ENCODE measurements at regions of chr4 and their contacts with region 1.

Region 1: DNA sequence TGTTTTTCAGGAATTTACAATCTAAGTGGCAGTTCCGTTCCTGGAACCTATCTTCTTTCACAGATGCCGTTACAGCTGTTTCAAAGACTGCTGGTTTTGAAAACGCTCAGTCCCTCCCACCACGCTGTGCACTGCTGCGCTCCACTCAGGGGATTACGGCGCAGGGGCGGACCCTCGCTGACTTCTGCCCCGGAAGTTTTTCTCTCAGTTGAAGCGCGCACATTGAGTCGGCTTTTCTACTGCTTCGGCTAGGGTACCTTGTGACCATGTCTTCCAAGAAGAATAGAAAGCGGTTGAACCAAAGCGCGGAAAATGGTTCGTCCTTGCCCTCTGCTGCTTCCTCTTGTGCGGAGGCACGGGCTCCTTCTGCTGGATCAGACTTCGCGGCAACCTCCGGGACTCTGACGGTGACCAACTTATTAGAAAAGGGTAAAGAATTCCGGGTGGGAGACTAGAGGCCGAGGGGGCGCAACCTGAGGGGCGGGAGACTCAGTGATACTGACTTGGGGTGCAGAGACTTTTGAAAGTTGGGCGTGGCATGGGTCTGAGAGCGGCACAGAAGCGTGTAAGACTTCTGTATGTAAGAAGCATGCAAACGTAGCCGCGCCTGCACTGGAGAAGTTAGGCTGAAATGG is 597 bp upstream of the NUDT6 start:
- DNase-seq: peak; percentile 93
- ATAC-seq: peak; percentile 98
- H3K4me3 Mint-ChIP-seq: no peak overlapping the region
- H3K27ac Mint-ChIP-seq: peak overlapping the region; percentile 87
- H3K4me1 Mint-ChIP-seq: peaks cover 9% of the 10 kb centered on the region
- H3K27me3 Mint-ChIP-seq: no peaks in the 10 kb centered on the region

Region 2: DNA sequence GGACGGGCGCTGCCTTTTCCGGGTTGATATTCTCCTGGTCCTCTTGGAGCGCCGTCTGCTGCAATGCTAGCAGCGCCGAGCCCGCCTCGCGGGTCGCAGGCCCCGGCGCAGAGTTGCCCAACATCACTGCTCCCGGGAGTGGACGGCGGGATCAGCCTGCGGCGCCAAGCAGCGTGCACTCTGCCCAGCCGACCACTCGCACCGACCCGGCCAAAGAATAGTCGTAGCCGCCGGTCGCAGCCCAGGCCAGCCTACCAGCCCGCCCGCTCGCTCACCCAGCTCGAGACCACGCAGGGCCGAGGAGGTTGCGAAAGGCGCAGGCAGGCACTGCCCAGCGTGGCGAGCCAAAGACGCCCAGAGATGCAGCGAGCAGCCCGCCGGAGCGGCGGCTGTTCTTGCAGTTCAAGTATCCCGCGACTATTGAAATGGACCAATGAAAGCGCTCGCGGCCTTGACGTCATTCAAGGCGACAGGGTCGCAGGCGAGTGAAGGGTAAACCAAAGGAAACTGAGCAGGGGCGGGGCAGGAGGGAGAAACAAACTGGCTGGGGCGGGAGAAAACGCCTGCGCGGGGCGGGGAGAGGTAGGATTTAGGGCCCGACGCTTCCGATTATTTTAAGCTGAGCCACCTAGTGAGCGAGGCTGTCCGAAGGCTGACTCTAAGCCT is 1099.4 kb before region 1 on chr4 and contains the start of gene CCNA2:
- CTCF ChIA-PET with region 1: no interaction called
- POLR2A ChIA-PET with region 1: no interaction called
- intact Hi-C with region 1: loop called in 1 of 2 experiments (anchors 10 kb)
- DNase-seq: peak; percentile 98
- ATAC-seq: peak; percentile 97
- H3K4me3 Mint-ChIP-seq: peak within 1 kb of the TSS; percentile 97
- H3K27ac Mint-ChIP-seq: peak within 1 kb of the TSS; percentile 88
- H3K4me1 Mint-ChIP-seq: peaks cover 16% of the 10 kb centered on the region
- H3K27me3 Mint-ChIP-seq: no peaks in the 10 kb centered on the region
- total RNA-seq, gene CCNA2: 113 to 118 TPM

Region 3: DNA sequence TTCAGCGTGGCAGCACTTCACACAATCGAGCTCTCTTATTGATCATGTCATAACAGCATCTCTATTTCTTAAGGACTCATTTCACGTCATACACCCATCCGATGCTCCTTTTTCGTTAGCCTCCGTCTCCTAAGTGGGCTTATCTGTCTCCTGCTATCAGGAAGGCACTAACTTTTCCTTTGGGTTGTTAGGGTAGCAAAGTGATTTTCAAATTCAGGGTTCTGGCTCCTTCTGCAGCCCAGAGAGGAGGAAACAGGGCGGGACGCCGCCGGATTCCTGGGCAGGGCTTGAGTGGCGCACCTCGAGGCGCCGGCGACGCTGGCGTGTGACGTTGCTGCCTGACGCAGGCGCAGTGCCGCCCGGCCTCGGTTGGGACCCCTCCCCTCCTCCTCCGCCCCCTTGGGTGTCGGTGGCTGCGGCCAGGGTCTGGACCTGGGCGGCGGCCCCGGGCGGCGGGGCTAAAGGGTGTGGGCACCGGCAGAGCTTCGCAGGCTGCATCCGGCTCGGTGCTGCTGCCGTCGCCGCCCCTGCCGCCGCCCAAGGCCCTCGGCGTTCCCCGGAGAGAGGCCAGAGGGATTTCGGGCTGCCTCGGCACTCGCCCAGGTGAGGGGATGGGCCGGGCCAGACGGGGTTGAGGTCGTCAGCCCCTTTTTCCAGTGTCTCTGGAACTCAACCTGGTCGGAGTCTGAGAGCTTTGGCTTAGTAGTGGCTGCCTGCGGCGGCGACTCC is 770.8 kb before region 1 on chr4 and contains the start of gene BLTP1:
- CTCF ChIA-PET with region 1: no interaction called
- POLR2A ChIA-PET with region 1: no interaction called
- intact Hi-C with region 1: loop called in 1 of 2 experiments (anchors 1 kb)
- DNase-seq: peak; percentile 93
- ATAC-seq: peak; percentile 91
- H3K4me3 Mint-ChIP-seq: peak within 1 kb of the TSS; percentile 85
- H3K27ac Mint-ChIP-seq: peak within 1 kb of the TSS; percentile 98
- H3K4me1 Mint-ChIP-seq: peaks cover 50% of the 10 kb centered on the region
- H3K27me3 Mint-ChIP-seq: no peaks in the 10 kb centered on the region
- total RNA-seq, gene BLTP1: 16.5 to 20.1 TPM

Region 4: DNA sequence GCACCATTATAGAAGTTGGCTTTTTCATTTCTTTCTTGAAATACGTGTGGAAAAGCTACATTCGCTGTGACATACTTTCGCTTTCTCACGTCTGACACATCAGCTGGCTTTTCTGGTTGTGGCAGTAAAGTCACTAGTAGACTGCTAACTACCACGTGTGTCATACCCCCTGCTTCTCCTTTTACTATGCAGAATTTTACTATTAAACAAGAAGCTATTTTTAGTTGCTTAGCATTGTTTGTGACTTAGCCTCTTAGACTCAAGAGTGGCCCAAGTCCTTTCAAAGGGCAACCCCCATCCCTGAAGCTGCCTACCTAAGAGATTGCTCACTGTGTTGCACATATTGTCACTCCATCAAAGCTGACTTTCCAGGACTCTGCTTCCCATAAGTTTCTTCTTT is 464.4 kb before region 1 on chr4:
- CTCF ChIA-PET with region 1: no interaction called
- POLR2A ChIA-PET with region 1: no interaction called
- intact Hi-C with region 1: loop called in 1 of 2 experiments (anchors 5 kb)
- DNase-seq: peak; percentile 74
- ATAC-seq: peak; percentile 86
- H3K4me3 Mint-ChIP-seq: peak overlapping the region; percentile 62
- H3K27ac Mint-ChIP-seq: peak overlapping the region; percentile 89
- H3K4me1 Mint-ChIP-seq: peaks cover 51% of the 10 kb centered on the region
- H3K27me3 Mint-ChIP-seq: no peaks in the 10 kb centered on the region

Region 5: GRCh38 chr4:122602277-122603142 is 320.5 kb before region 1 on chr4:
- CTCF ChIA-PET with region 1: interaction called, 14 read pairs
- POLR2A ChIA-PET with region 1: no interaction called
- intact Hi-C with region 1: loop called in 1 of 2 experiments (anchors 2 kb)
- DNase-seq: peak; percentile 40
- ATAC-seq: peak; percentile 89
- H3K4me3 Mint-ChIP-seq: peak overlapping the region; percentile 54
- H3K27ac Mint-ChIP-seq: peak overlapping the region; percentile 59
- H3K4me1 Mint-ChIP-seq: peaks cover 30% of the 10 kb centered on the region
- H3K27me3 Mint-ChIP-seq: peaks cover 3% of the 10 kb centered on the region

Region 6: DNA sequence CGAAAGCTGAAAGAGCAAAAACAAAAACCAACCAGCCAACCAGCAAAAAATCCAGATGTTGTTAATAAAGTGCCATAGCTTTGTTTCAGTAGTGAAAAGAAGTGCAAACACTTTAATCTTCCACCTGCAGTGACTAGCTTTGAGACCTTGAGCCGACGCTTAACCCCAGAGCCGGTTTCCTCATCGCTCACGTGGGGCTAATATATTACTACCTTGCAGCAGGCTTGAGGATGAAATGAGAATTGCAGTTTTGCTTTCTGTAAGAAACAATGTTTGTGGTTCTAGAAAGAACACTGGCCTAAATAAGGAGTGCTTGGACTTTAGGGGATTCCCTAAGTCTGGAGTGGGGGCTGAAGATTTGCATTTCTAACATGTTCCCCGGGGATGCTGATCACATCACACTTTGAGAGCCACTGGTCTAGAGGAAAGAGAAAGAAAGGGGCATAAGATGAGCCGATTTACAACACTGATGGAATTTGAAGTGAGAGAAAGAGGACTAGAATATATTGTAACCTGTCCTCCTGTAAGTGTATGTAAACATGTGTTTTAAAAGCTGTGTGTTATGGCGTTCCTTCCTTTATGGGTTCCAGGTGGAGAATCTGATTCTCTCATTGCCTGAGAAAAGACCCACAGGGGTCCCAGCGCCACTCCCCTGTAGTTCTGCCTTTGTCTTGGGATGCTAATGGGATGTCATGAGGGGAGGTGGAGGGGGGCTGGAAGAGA is 95.0 kb before region 1 on chr4:
- CTCF ChIA-PET with region 1: no interaction called
- POLR2A ChIA-PET with region 1: no interaction called
- intact Hi-C with region 1: loop called in 1 of 2 experiments (anchors 5 kb)
- DNase-seq: peak; percentile 70
- ATAC-seq: peak; percentile 89
- H3K4me3 Mint-ChIP-seq: peak overlapping the region; percentile 75
- H3K27ac Mint-ChIP-seq: peak overlapping the region; percentile 40
- H3K4me1 Mint-ChIP-seq: peaks cover 12% of the 10 kb centered on the region
- H3K27me3 Mint-ChIP-seq: peaks cover 70% of the 10 kb centered on the region

Region 7: DNA sequence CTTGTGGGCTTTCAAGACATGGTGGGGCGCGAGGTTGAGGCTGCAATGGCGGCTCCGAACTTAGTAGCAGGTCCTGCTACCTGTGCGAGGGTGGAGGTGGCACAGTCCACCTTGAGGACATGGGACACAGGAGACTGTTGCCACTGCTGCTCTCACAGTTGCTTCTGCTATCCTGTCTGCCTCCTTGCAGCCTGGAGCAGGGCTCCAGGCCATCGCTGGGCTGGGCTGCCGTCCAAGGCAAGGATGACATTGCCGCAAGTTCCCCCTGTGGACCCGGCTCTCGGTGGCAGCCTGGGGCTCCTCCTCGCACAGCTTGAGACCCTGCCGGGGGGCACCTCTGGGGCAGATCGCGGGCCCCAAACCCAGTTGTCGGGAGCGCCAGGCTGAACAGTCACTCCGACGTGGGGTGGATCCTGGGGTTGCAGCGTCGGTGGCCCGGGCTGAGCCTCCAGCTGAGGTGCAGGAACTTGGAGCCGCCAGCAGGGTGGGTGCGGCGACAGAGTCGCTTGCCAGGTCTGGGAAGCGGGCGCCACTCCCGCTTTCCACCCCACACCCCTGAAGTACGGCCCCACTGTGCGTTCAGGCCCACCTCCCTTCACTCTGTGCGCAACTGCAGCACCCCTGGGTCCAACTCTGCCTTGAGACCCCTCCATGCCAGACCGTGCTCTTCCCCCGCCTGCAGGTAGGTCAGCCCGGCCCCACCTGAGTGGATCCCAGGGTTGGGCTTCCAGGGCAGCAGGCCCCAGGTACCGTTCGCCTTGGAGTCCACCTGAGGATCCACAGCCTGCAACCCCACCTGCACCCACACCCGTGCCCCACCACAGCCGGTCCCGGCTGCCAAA is 192.1 kb after region 1 on chr4:
- CTCF ChIA-PET with region 1: no interaction called
- POLR2A ChIA-PET with region 1: no interaction called
- intact Hi-C with region 1: no loop called
- DNase-seq: no peak
- ATAC-seq: no peak
- H3K4me3 Mint-ChIP-seq: no peak overlapping the region
- H3K27ac Mint-ChIP-seq: no peak overlapping the region
- H3K4me1 Mint-ChIP-seq: no peaks in the 10 kb centered on the region
- H3K27me3 Mint-ChIP-seq: no peaks in the 10 kb centered on the region